ENCODE measurements at regions of chr18 and their contacts with region 1.

Region 1: DNA sequence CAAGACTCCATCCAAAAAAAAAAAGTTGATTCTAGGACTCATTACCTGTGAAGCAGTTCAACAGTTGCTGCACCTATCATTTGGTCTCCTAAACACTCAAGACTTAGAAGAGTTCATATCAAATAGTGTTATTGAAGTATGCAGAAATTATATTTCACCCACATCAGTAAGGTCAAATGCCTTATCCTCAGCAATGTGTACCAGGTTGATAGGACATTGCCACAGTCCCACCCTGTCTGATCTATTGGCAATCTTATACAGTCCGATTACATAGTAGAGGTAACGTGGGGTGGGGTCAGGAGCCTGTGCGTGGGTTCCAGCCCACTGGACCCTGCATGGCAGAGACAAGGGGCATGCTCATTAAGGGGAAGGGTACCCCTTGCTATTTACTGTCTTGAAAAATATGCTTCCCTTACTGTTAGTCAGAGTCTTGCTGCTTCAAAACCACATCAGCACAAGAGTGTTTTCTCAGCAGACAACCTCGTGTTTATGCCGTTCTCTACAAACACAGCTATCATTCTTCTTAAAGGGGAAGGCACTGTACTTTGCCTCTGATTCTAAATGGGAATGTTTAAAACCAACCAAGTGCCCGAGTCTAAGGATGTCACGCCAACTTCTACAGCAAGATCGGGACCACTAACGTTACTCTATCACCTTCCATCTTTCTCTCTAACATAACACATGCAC is 115.2 kb downstream of the MTCL1 start:
- DNase-seq: no peak
- ATAC-seq: no peak

Region 2: DNA sequence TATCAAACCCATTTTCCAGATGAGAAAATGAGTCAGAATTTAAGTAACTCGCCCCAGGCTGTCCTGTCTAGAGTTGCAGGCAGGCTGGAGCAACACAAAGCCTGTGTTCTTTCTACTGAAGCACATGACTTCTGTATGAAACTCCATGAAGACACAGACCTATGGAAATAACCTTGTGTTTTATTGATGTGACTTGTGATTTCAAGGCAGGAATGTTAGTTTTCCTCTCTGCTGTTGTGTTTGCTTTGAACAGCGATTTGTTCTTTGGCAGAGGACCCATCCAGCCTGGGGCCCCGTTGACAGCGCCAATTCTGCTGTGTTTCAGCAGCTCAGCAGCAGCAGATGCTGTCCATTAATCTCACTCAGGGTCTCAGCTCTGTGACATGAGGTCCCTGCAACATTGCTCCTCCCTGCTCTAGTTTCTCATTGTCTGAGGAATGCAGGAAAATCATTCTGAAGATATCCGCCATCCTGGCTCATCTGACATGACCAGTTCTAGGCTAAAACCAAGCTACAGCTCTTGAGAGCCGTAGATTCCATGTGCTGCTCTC is 555.6 kb before region 1 on chr18:
- intact Hi-C with region 1: loop called (anchors 5 kb)
- DNase-seq: no peak
- ATAC-seq: peak; percentile 21

Region 3: DNA sequence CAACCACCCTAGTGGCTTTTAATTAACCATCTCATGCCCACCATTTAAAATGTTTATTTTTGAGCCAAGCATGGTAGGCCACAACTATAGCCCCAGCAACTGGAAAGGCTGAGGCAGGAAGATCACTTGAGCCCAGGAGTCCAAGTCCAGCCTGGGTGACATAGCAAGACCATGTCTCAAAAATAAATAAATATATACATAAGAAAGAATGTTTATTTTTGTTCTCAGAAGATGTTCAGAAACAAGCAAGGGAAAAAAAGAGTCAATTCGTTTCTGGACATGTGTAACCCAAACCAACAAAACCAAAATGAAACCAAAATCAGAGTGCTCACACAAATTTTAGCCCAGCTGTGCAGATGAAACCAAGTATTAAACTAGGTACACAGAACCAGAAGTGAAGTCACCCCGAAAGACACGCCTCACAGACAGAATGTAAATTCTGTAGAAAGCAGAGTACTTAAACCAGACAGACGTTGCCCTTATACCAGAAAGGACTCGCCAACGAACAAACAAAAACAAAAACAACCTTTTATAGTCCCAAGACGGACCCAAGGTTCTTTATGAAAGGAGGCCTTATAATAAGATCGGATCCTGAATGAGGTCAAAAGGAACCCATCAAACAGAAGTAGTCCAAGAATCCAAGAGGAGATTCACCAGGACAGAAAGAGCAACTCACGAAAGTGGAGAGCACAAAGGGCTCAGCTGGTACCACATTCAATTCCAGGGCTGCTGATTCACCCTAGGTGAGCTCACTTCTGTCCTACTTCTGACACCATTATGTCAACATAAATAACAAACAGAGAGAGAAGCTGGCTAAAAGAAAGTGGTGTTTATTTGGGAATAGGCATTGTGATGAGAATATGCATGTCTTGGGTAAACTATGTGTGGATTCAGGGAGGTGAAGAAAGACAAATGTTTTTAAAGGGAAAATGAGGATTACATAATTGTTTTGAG is 147.0 kb before region 1 on chr18:
- intact Hi-C with region 1: no loop called
- DNase-seq: no peak
- ATAC-seq: no peak

Region 4: DNA sequence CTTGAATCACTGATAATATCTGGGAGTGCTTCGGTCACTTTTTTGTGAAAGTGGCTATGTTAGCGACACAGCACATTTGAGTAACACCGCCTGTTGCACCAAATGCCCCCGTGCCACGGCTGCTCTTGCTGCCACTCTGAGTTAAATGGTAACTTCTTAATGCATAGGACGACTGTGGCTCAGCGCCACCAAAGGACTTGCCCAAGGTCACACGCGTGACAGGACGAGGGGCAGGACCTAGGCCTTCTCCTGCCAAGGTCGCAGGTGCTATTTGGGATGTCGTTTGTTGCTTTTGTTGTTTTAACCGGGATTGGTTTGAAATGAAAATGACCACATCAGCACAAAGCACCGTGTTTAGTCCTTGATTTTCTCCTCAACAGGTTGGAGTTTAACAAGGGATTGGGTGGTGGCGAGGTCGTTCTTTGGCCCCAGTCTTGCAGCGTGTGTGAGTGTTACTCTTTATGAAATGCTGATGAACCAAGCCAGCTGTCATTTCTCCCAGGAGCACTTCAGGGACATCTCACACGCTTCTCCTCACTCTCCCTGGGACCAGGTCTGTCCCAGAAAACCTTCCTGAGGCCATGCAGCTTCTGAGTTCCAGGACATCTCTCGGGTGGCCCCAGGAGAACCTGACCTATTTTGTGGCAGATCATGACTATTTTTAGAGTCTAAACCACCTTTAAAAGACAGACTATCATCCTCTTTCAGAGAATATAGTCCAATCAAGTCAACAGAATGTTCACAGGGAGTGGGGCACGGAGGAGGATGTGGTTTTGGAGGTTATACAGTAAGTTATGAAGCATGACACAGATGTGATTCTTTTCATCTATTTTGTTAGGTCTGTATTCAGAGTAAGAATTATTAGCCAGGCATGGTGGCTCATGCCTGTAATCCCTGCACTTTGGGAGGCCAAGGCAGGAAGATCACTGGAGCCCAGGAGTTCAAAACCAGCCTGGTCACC is 65.3 kb before region 1 on chr18:
- intact Hi-C with region 1: no loop called
- DNase-seq: no peak
- ATAC-seq: no peak

Measured in sciatic nerve (tissue), 2 donors.